GM10248 (cell line): ENCODE measurements at regions of chr10 and their contacts with region 1.

Region 1: DNA sequence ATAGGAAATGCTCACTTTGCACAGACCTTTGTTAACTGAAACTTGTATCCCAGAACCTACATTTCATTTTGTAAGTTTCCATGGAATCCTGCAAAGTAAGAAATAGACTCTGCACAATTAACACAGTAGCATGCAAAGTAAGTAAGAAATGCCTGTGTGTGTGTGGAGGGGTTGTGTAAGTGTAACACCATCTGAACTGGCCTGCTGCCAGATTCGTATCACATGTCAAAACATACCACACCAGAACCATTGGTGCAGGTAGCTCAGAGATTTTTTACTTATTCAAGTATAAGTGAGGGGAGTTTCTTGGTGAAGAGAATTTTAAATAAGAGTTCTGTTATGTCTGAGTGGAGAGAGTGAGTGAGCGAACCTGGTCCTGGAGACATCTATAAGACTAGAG is 17.9 kb upstream of the DDX21 start:
- DNase-seq: no peak
- CTCF ChIP-seq: no peak

Region 2: DNA sequence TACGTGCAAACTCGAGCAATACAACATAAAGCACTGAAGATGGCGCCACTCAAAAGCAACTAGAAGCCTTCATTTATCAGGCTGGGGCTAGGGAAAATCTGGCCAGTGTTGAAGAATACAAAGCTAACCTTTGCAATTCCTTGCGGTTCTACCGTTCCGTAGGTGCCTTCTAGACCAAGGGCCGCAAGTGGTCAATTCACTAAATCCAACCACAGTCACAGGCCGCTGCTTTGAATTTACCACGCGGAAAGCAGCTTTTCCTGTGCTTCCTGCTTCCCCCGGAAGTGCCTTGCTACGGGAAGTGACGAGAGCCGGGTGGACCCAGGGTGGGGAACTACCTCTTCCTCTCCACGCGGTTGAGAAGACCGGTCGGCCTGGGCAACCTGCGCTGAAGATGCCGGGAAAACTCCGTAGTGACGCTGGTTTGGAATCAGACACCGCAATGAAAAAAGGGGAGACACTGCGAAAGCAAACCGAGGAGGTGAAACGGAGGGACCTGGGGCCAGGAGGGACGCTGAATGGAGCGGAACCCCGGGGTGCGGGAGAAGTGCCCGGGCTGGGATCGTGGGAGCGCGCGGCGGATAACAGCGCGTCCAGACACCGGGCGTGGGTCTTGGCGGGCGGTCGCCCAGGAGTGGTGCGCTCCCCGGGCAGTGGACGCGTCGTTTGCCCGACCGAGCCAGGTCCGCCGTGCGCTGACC is 17.9 kb after region 1 on chr10 and contains the start of gene DDX21:
- CTCF ChIA-PET with region 1: interaction called, 10 read pairs
- POLR2A ChIA-PET with region 1: no interaction called
- DNase-seq: peak; percentile 94
- CTCF ChIP-seq: peak; percentile 55

Region 3: DNA sequence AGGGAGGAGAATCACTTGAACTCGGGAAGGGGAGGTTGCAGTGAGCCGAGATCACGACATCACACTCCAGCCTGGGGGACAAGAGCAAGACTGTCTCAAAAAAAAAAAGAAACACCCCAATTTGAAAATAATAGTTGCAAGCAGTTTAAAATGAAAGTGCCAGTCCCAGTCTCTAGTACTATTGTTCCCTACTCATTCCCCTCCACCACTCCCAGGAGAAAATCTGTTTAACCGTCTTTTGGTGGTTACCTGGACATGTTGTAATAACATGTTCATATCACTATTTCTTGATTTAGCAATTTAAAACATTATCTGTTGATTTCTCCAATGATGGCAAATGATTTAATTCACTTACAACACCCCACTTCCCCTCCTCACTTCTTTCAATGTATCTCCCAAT is 95.1 kb after region 1 on chr10:
- CTCF ChIA-PET with region 1: no interaction called
- POLR2A ChIA-PET with region 1: no interaction called
- DNase-seq: no peak
- CTCF ChIP-seq: no peak

Region 4: DNA sequence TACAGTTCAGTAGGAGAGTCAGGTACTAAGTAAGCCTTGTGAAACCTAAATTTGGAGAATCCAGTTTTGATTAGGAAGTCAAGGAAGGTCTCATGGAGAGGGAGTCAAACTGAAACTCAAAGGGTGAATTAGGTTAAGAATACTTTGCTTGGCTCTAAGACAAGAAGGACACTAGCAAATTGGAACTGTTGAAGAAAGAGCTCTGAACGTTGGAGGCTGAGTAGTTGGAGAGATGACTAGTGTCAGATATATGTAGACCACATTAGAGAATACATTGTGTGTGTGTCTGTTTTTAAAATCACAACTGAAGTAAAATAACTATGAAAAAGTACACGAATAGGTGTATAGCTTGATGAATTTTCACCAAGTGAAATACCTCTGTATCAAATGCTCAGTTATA is 192.1 kb after region 1 on chr10:
- CTCF ChIA-PET with region 1: no interaction called
- POLR2A ChIA-PET with region 1: no interaction called
- DNase-seq: no peak
- CTCF ChIP-seq: no peak